Sciatic nerve (tissue), 2 donors: ENCODE measurements at regions of chr2 and their contacts with region 1.

Region 1: GRCh38 chr2:157497638-157498314 is 53.9 kb upstream of the CYTIP start:
- DNase-seq: no peak
- ATAC-seq: peak; percentile 68

Region 2: GRCh38 chr2:158761621-158762020 is 1263.8 kb after region 1 on chr2:
- intact Hi-C with region 1: loop called (anchors 5 kb)
- DNase-seq: no peak
- ATAC-seq: no peak